A673 (cell line): ENCODE measurements at regions of chr11 and their contacts with region 1.

Region 1: GRCh38 chr11:96389720-96390487 is at the starts of genes CCDC82 and JRKL:
- DNase-seq: peak; percentile 99
- H3K4me3 ChIP-seq: peak within 1 kb of the TSS; percentile 74
- H3K27ac ChIP-seq: peak within 1 kb of the TSS; percentile 88
- H3K4me1 ChIP-seq: peaks cover 24% of the 10 kb centered on the region
- H3K27me3 ChIP-seq: no peaks in the 10 kb centered on the region
- CTCF ChIP-seq: no peak
- total RNA-seq, gene CCDC82: 30.5 and 33.1 TPM in 2 replicates
- total RNA-seq, gene JRKL: 11.0 and 12.7 TPM in 2 replicates

Region 2: DNA sequence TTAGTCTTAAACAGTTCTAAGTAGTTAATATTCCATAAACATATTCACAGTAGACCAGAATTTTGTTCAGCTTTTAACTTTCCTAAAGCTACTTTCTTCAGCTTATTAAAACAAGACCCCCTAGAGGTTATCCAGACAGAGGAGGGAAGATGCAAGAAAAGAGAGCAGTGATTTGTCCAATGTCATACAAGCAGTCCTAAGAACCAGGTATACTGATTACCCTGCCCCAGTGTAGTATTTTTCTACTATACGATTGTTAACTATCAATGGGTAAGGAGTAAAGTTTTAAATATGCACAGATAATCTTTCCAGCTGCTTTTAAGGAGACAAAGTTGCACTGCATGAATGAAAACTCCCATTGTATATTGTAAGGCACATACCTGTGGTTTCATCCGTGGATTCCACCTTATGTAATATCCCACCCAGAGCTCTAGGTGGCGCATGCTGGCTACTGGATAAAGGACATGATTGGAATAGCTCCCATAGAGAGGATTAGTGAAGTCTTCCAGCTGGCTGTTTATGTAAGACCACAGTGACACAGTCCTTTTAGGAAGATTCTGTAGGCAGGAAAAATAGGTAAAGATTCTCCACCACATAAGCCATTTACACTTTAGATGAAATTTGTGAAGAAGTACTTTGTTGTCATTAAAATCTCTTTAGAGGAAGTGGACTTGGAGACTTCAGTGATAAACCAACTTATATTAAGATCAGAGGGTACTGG is 554.0 kb before region 1 on chr11:
- CTCF ChIA-PET with region 1: interaction called, 33 read pairs
- POLR2A ChIA-PET with region 1: no interaction called
- intact Hi-C with region 1: loop called (anchors 1 kb)
- DNase-seq: peak; percentile 93
- H3K4me3 ChIP-seq: no peak overlapping the region
- H3K27ac ChIP-seq: peak overlapping the region; percentile 39
- H3K4me1 ChIP-seq: peaks cover 16% of the 10 kb centered on the region
- H3K27me3 ChIP-seq: no peaks in the 10 kb centered on the region
- CTCF ChIP-seq: peak; percentile 99

Region 3: DNA sequence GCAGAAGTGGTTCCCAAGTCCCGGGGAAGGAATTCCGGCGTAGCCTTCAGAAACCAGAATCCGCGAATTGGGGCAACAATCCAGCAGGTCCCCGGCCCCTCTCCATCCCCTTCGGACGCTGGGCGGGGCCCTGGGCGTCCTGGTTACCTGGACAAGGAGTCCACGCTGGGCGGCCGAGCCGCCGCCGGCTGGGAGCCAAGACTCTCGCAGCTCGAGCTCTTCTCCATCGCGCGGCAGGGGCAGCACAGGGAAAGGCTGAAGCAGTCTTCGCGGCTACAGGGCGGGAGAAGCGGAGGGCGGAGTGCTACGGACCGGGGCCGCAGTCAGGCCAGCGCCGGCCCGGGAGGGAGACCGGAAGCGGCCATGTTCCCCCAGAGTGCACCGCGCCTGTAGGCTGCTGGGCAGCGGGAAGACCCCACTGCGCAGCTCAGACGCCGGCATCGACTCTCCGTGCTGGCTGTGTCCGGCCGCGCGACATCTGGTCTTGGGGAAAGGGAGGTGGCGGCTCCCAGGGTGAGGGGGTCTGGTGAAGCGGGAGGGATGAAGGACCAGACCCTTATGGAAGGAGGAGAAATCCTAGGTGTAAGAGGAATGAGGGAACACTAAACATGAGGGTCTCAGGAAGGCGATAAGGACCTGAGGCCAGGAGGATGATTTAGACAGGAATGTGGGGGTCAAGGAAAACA is 466.0 kb before region 1 on chr11 and contains the start of gene MTMR2:
- CTCF ChIA-PET with region 1: no interaction called
- POLR2A ChIA-PET with region 1: no interaction called
- intact Hi-C with region 1: loop called (anchors 5 kb)
- DNase-seq: peak; percentile 78
- H3K4me3 ChIP-seq: peak within 1 kb of the TSS; percentile 97
- H3K27ac ChIP-seq: peak within 1 kb of the TSS; percentile 89
- H3K4me1 ChIP-seq: peaks cover 18% of the 10 kb centered on the region
- H3K27me3 ChIP-seq: no peaks in the 10 kb centered on the region
- CTCF ChIP-seq: no peak
- total RNA-seq, gene MTMR2: 52.4 and 58.6 TPM in 2 replicates

Region 4: DNA sequence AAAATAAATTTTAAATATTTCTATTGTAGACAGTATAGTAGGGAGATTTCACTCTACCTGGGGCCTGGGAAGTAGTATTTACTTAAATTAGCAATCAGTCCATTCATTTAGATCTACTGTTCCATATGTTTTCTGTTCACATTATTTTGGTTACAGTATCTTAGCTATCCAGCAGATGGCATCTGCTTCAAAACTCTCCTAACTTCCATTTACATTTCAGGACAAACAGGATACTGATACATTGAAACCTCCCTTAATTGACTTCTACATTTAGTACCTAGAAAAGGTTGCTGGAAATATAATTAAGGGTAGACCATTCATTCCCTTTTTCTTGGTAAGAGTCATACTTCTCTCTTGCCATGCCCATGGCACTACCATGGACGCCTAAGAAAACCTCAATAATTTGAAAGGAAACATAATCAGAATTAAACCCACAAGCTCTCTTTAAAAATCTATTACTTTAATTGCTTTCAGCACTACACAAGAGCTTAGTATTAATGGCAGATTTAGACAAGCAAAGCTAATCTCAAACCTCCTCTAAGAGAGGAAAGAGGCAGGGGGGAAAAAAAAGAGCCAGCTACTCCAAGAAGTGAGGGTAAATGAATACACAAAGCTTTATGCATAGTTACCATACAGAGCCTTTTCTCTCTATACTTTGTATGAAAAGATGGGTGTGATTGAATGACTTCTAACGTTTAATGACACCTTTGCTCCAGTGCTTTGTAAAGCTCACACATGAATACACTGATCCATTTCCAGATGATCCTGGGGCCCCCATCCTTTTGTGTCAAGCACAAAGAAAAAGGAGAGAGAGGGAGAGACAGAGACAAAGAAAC is 334.8 kb before region 1 on chr11:
- CTCF ChIA-PET with region 1: interaction called, 12 read pairs
- POLR2A ChIA-PET with region 1: no interaction called
- intact Hi-C with region 1: loop called (anchors 1 kb)
- DNase-seq: peak; percentile 70
- H3K4me3 ChIP-seq: no peak overlapping the region
- H3K27ac ChIP-seq: no peak overlapping the region
- H3K4me1 ChIP-seq: peaks cover 38% of the 10 kb centered on the region
- H3K27me3 ChIP-seq: no peaks in the 10 kb centered on the region
- CTCF ChIP-seq: peak; percentile 79

Region 5: DNA sequence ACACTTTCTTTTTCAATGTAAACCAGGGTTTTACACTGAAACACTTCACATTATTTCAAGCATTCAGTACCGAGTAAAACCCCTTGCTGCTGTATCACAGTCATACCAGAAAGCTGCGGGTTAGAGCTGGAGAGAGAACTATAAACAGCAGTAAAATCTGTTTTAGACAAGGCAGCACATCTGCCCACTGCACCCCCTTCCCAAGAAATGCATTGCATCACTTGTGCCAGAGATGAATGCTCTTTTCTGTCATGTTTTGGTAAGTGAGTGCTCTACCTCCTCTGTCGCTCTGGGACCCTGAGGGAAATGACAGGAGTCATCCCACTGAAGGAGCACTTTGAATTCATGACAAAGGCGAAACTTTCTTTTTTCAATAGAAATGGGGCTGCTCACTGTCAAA is 154.2 kb before region 1 on chr11:
- CTCF ChIA-PET with region 1: no interaction called
- POLR2A ChIA-PET with region 1: interaction called, 3 read pairs
- intact Hi-C with region 1: loop called (anchors 5 kb)
- DNase-seq: no peak
- H3K4me3 ChIP-seq: no peak overlapping the region
- H3K27ac ChIP-seq: peak overlapping the region; percentile 3
- H3K4me1 ChIP-seq: peaks cover 68% of the 10 kb centered on the region
- H3K27me3 ChIP-seq: no peaks in the 10 kb centered on the region
- CTCF ChIP-seq: no peak